ENCODE measurements at regions of chr5 and their contacts with region 1.

Region 1: DNA sequence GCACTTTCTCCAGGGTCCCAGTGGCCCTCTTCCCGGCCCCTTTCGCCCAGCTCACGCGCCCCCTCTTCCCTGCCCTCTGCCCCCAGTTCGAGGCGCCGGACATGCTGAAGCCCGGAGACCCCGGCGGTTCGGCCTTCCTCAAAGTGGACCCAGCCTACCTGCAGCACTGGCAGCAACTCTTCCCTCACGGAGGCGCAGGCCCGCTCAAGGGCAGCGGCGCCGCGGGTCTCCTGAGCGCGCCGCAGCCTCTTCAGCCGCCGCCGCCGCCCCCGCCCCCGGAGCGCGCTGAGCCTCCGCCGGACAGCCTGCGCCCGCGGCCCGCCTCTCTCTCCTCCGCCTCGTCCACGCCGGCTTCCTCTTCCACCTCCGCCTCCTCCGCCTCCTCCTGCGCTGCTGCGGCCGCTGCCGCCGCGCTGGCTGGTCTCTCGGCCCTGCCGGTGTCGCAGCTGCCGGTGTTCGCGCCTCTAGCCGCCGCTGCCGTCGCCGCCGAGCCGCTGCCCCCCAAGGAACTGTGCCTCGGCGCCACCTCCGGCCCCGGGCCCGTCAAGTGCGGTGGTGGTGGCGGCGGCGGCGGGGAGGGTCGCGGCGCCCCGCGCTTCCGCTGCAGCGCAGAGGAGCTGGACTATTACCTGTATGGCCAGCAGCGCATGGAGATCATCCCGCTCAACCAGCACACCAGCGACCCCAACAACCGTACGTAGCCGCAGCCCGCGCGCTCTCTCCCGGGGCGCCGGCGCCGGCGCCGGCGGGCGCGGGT is 1.1 kb downstream of the PRDM6 start:
- DNase-seq: peak; percentile 27
- ATAC-seq: peak; percentile 52
- H3K4me3 ChIP-seq: peak overlapping the region; percentile 58
- H3K27ac ChIP-seq: peak overlapping the region; percentile 22; the same call in 1 of the 2 replicates
- H3K4me1 ChIP-seq: peaks cover 7% of the 10 kb centered on the region; the same call in 1 of the 2 replicates
- H3K27me3 ChIP-seq: peaks cover 61% of the 10 kb centered on the region
- CTCF ChIP-seq: no peak
- POLR2A ChIP-seq: no peak
- RAD21 ChIP-seq: no peak

Region 2: GRCh38 chr5:122736086-122736845 is 353.8 kb before region 1 on chr5:
- CTCF ChIA-PET with region 1: no interaction called
- POLR2A ChIA-PET with region 1: no interaction called
- dilution Hi-C with region 1: no loop called
- in situ Hi-C with region 1: no loop called
- intact Hi-C with region 1: no loop called
- DNase-seq: no peak
- ATAC-seq: no peak
- H3K4me3 ChIP-seq: no peak overlapping the region
- H3K27ac ChIP-seq: no peak overlapping the region
- H3K4me1 ChIP-seq: no peaks in the 10 kb centered on the region
- H3K27me3 ChIP-seq: peaks cover 2% of the 10 kb centered on the region; the same call in 1 of the 2 replicates
- CTCF ChIP-seq: no peak
- POLR2A ChIP-seq: no peak
- RAD21 ChIP-seq: no peak

Region 3: GRCh38 chr5:122896598-122897282 is 193.4 kb before region 1 on chr5:
- CTCF ChIA-PET with region 1: no interaction called
- POLR2A ChIA-PET with region 1: no interaction called
- dilution Hi-C with region 1: no loop called
- in situ Hi-C with region 1: no loop called
- intact Hi-C with region 1: loop called (anchors 5 kb)
- DNase-seq: peak; percentile 85
- ATAC-seq: peak; percentile 91
- H3K4me3 ChIP-seq: no peak overlapping the region
- H3K27ac ChIP-seq: no peak overlapping the region
- H3K4me1 ChIP-seq: peaks cover 3% of the 10 kb centered on the region; the same call in 1 of the 2 replicates
- H3K27me3 ChIP-seq: no peaks in the 10 kb centered on the region; the same call in 1 of the 2 replicates
- CTCF ChIP-seq: peak; percentile 61
- POLR2A ChIP-seq: no peak
- RAD21 ChIP-seq: peak; percentile 65

Region 4: GRCh38 chr5:122984425-122984824 is 105.7 kb before region 1 on chr5:
- CTCF ChIA-PET with region 1: no interaction called
- POLR2A ChIA-PET with region 1: no interaction called
- dilution Hi-C with region 1: no loop called
- in situ Hi-C with region 1: no loop called
- intact Hi-C with region 1: no loop called
- DNase-seq: no peak
- ATAC-seq: no peak
- H3K4me3 ChIP-seq: no peak overlapping the region
- H3K27ac ChIP-seq: no peak overlapping the region
- H3K4me1 ChIP-seq: peaks cover 1% of the 10 kb centered on the region; the same call in 1 of the 2 replicates
- H3K27me3 ChIP-seq: no peaks in the 10 kb centered on the region
- CTCF ChIP-seq: no peak
- POLR2A ChIP-seq: no peak
- RAD21 ChIP-seq: no peak

Region 5: DNA sequence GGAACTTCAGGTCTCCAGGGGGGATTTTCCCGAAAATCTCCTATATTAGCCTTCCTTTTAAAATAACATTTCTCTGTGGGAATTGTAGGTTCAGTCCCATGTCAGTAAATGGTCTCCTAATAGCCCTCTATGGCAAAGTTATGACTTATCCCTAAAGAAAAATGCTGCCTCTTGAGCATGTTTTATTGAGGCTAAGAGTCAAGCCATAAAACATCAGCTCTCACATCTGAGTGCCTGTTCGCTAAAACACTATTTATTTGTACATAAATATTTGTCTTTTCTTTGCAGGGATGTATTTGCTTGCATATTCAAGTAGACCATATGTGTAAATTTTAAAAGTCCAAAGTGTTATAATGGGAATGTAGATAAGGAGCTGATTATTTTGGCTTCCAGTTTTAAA is 159.4 kb after region 1 on chr5:
- CTCF ChIA-PET with region 1: no interaction called
- POLR2A ChIA-PET with region 1: no interaction called
- dilution Hi-C with region 1: no loop called
- in situ Hi-C with region 1: no loop called
- intact Hi-C with region 1: no loop called
- DNase-seq: no peak
- ATAC-seq: no peak
- H3K4me3 ChIP-seq: no peak overlapping the region
- H3K27ac ChIP-seq: no peak overlapping the region
- H3K4me1 ChIP-seq: no peaks in the 10 kb centered on the region
- H3K27me3 ChIP-seq: no peaks in the 10 kb centered on the region
- CTCF ChIP-seq: no peak
- POLR2A ChIP-seq: no peak
- RAD21 ChIP-seq: no peak

Region 6: DNA sequence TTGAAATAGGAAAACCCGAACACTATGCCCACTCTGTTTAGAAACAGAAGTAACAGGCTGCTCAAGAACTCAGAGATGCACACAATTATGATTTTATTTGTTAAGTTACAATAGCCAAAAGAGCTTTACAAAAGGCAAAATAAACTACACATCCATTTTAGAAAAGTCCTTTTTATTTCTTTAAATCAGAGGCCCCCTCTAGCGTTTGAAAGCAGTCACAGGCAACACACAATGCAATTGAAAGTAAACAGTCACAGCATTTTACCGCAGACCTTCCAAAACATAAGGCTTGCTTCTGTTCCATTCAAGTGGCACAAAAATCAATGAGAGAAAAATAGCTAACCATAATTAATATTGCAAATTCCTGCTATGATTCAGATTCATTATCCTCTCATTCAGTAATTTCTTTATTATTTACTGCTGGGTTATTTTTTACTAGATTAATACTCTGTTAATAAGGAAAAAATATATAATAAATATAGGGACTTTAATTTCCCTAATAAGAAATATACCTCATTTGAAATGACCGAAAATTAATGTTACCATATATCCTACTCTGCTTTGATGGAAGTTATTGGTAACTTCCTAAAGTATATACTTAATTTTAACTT is 254.8 kb after region 1 on chr5:
- CTCF ChIA-PET with region 1: no interaction called
- POLR2A ChIA-PET with region 1: no interaction called
- dilution Hi-C with region 1: no loop called
- in situ Hi-C with region 1: no loop called
- intact Hi-C with region 1: loop called (anchors 1 kb)
- DNase-seq: peak; percentile 52
- ATAC-seq: peak; percentile 79
- H3K4me3 ChIP-seq: no peak overlapping the region
- H3K27ac ChIP-seq: no peak overlapping the region
- H3K4me1 ChIP-seq: no peaks in the 10 kb centered on the region
- H3K27me3 ChIP-seq: no peaks in the 10 kb centered on the region
- CTCF ChIP-seq: peak; percentile 83
- POLR2A ChIP-seq: no peak
- RAD21 ChIP-seq: peak; percentile 71

Region 7: DNA sequence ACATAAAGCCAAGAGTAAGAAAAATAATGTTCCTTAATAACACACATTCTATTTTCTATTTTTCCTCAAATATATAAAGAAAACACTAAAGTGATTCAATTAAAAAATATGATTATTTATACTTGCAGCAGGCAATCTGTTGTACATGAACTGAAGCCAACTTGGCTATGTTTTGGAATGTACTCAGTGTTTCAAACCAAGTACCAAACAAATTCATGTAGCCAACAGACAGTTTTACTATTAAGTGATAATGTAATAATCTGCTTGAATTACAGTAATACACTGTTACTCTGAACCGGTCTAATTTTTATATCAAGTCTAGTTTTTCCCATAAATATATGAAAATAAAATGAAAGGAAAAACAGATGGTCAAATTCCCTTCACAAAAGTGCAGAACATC is 275.1 kb after region 1 on chr5:
- CTCF ChIA-PET with region 1: no interaction called
- POLR2A ChIA-PET with region 1: no interaction called
- dilution Hi-C with region 1: no loop called
- in situ Hi-C with region 1: no loop called
- intact Hi-C with region 1: loop called (anchors 2 kb)
- DNase-seq: peak; percentile 18
- ATAC-seq: no peak
- H3K4me3 ChIP-seq: no peak overlapping the region
- H3K27ac ChIP-seq: peak overlapping the region; percentile 52; the same call in 1 of the 2 replicates
- H3K4me1 ChIP-seq: no peaks in the 10 kb centered on the region; the same call in 1 of the 2 replicates
- H3K27me3 ChIP-seq: no peaks in the 10 kb centered on the region
- CTCF ChIP-seq: no peak
- POLR2A ChIP-seq: no peak
- RAD21 ChIP-seq: no peak

Region 8: GRCh38 chr5:123423278-123424149 is 333.4 kb after region 1 on chr5 and contains the start of gene CEP120:
- CTCF ChIA-PET with region 1: no interaction called
- POLR2A ChIA-PET with region 1: no interaction called
- dilution Hi-C with region 1: no loop called
- in situ Hi-C with region 1: no loop called
- intact Hi-C with region 1: loop called (anchors 2 kb)
- DNase-seq: peak; percentile 99
- ATAC-seq: peak; percentile 99
- H3K4me3 ChIP-seq: peak within 1 kb of the TSS; percentile 87
- H3K27ac ChIP-seq: peak within 1 kb of the TSS; percentile 68
- H3K4me1 ChIP-seq: no peaks in the 10 kb centered on the region; the same call in 1 of the 2 replicates
- H3K27me3 ChIP-seq: no peaks in the 10 kb centered on the region
- CTCF ChIP-seq: peak; percentile 94
- POLR2A ChIP-seq: peak; percentile 65; the same call in 1 of the 2 replicates
- RAD21 ChIP-seq: peak; percentile 64
- total RNA-seq, gene CEP120: 16.4 and 46.1 TPM in 2 replicates

Measured in IMR-90 (cell line).